ENCODE measurements at regions of chr10 and their contacts with region 1.

Region 1: DNA sequence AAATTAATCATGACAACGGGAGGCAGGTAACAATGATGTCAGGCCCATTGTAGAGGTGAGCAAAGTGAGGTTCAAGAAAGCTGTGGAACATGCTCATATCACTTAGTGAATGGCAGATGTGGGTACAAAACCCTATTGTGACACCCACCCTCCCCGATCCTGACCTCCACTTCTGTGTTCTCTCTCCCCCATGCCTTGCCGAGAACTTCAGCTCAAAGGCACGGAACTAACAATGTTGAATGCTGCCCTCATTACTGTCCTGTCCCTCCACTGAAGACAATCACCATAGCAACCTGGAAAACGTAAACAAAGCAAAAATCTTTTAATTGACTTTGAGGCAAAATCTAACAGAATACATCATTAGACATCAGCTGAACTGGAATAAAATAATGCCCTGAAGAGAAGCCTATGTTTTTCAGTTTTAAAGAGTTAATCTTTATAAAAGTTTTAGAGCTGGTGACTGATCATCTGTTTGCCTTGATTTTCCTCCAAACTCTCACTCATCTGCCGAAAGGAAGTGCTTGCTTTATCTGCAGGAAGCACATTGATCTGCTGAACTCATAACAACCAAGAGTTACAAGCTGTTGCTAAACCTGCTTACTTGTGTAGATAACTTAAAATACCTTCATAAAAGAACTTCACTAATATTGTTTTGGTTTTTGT is 133.6 kb downstream of the CUBN start:
- DNase-seq: peak; percentile 97 to 100 (median 98)
- H3K4me3 ChIP-seq: peak overlapping the region in 4 of 7 experiments; percentile 12 to 63 (median 33)
- H3K27ac ChIP-seq: peak overlapping the region; percentile 96 to 97
- H3K4me1 ChIP-seq: peaks cover 5 to 47% (median 15%) of the 10 kb centered on the region in 4 experiments
- H3K27me3 ChIP-seq: no peaks in the 10 kb centered on the region

Region 2: GRCh38 chr10:16765509-16766375 is 230.3 kb before region 1 on chr10:
- CTCF ChIA-PET with region 1: no interaction called
- POLR2A ChIA-PET with region 1: no interaction called
- DNase-seq: peak in 2 of 3 donors; percentile 9 to 10
- H3K4me3 ChIP-seq: no peak overlapping the region
- H3K27ac ChIP-seq: no peak overlapping the region
- H3K4me1 ChIP-seq: peaks cover 0 to 10% (median 4%) of the 10 kb centered on the region in 4 experiments
- H3K27me3 ChIP-seq: no peaks in the 10 kb centered on the region

Region 3: DNA sequence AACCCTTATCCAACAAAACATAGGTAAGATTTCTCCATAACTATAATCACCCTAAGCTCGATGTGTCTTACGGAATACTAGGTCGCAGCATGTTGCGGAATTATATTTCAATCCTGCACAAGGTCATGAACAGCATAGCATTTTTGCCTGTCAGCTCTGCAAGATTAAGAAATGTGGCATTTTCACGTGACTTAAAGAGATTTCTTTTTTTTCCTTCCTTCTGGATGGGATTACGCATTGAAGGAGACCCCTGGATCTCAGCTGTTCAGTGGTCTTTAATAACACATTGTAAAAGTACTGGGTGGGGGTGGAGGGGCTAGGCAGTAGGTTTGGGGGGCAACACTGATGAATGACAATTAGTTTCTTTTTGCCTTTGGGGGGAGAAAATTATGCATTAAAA is 26.9 kb after region 1 on chr10:
- CTCF ChIA-PET with region 1: interaction called, 10 read pairs
- POLR2A ChIA-PET with region 1: no interaction called
- DNase-seq: peak in 1 of 3 donors; percentile 26
- H3K4me3 ChIP-seq: peak overlapping the region in 1 of 7 experiments; percentile 30
- H3K27ac ChIP-seq: peak overlapping the region; percentile 48 to 95
- H3K4me1 ChIP-seq: peaks cover 15 to 39% (median 32%) of the 10 kb centered on the region in 4 experiments
- H3K27me3 ChIP-seq: no peaks in the 10 kb centered on the region